ENCODE measurements at regions of chr10 and their contacts with region 1.

Region 1: DNA sequence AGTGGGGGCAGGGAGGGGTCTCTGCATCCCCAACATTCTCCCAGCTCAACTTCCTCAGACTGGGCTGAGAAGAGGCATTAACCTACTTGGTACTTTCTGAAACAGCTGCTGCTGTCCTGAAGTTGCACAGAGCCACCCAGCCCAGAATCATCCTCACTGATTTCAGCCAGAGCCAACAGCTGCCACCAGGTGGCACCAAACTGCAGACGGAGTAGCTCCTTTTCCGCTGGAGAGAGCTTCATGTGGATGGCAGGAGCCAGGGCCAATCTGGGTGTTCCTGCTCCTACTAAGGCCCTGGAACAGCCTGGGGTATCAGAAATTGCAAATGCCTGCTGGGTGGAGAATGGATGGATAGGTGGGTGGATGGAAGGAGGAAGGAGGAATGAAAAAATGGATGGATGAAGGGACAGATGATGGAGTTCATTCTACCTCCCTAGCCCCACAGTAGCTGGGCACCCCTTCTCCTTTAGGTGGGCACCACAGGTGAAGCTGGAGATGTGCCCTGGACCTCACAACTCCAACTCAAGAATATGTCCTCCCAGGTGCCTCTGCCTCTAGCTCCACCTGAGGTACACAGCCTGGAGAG is 11.8 kb upstream of the DRGX start:
- H3K4me3 ChIP-seq: no peak overlapping the region
- H3K27ac ChIP-seq: no peak overlapping the region
- H3K4me1 ChIP-seq: no peaks in the 10 kb centered on the region
- CTCF ChIP-seq: peak; percentile 84

Region 2: GRCh38 chr10:49518982-49519578 is 111.4 kb after region 1 on chr10:
- CTCF ChIA-PET with region 1: interaction called, 31 read pairs
- POLR2A ChIA-PET with region 1: no interaction called
- H3K4me3 ChIP-seq: no peak overlapping the region
- H3K27ac ChIP-seq: no peak overlapping the region
- H3K4me1 ChIP-seq: no peaks in the 10 kb centered on the region
- CTCF ChIP-seq: no peak